MCF 10A (cell line): ENCODE measurements at regions of chr4 and their contacts with region 1.

Region 1: GRCh38 chr4:106329041-106329618 is 12.8 kb downstream of the AIMP1 start:
- DNase-seq: peak; percentile 33
- H3K4me3 Mint-ChIP-seq: no peak overlapping the region
- H3K27ac Mint-ChIP-seq: no peak overlapping the region
- H3K4me1 Mint-ChIP-seq: no peaks in the 10 kb centered on the region
- H3K27me3 Mint-ChIP-seq: no peaks in the 10 kb centered on the region
- CTCF ChIP-seq: peak; percentile 58

Region 2: GRCh38 chr4:106315968-106316772 is 13.0 kb before region 1 on chr4 and contains the starts of genes AIMP1 and TBCK:
- CTCF ChIA-PET with region 1: interaction called, 4 read pairs
- POLR2A ChIA-PET with region 1: interaction called, 13 read pairs
- intact Hi-C with region 1: no loop called
- DNase-seq: peak; percentile 91
- H3K4me3 Mint-ChIP-seq: no peak within 1 kb of the TSS
- H3K27ac Mint-ChIP-seq: no peak within 1 kb of the TSS
- H3K4me1 Mint-ChIP-seq: peaks cover 25% of the 10 kb centered on the region
- H3K27me3 Mint-ChIP-seq: no peaks in the 10 kb centered on the region
- CTCF ChIP-seq: no peak
- total RNA-seq, gene AIMP1: 103 and 126 TPM in 2 replicates
- total RNA-seq, gene TBCK: 27.8 and 33.2 TPM in 2 replicates

Region 3: GRCh38 chr4:106898621-106899230 is 569.6 kb after region 1 on chr4:
- CTCF ChIA-PET with region 1: interaction called, 3 read pairs
- POLR2A ChIA-PET with region 1: no interaction called
- intact Hi-C with region 1: loop called (anchors 5 kb)
- DNase-seq: peak; percentile 71
- H3K4me3 Mint-ChIP-seq: no peak overlapping the region
- H3K27ac Mint-ChIP-seq: no peak overlapping the region
- H3K4me1 Mint-ChIP-seq: no peaks in the 10 kb centered on the region
- H3K27me3 Mint-ChIP-seq: no peaks in the 10 kb centered on the region
- CTCF ChIP-seq: peak; percentile 72